Lower leg skin (tissue), 4 donors: ENCODE measurements at regions of chr1 and their contacts with region 1.

Region 1: DNA sequence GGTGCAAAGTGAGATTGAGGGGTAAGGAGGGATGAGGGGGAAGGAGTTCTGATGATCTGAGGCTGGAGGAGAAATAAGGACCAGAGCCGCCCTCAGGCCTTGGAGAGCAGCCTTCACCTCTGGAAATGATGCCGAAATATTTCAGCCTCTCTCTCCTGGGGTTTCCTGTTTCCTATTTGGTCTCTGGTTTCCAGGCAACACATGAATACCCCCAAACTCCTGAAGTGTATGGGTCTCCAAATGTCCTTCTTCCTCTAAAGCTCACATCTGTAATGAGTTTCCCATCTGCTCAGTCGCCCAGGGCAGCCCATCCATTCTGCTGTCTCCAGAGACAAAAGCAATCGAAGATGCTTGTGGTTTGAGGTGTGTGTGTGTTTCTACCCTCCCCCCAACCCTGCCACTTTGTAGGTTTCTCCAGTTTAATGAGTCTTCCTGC is 52.0 kb upstream of the FAM20B start:
- DNase-seq: no peak
- H3K4me3 ChIP-seq: no peak overlapping the region
- CTCF ChIP-seq: no peak
- POLR2A ChIP-seq: no peak

Region 2: DNA sequence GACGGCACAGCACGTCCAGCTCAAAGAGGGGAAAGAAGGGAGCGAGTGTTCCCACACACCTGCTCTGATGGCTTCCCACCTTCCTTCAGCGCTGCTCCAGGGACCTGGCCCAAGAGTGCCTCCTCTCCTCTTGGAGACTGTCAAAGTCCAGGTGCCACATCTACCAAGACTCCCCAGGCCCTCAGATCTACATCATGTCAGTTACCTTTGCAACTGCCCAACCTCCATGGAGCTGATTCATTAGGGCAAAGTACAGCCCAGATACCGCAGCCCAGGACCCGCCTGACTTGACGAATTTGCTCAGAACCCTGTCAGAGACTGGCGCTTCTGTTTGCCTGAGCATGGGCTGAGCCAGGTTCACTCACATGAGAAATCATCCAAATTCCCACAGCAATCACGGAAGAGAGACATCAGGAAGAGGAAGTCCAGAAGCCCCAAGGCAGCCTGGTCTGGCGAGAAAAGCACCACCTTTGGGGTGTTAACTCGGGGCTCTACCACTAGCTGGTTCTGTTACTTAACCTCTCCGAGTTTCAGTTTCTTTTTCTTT is 1003.8 kb before region 1 on chr1 and contains the start of gene SEC16B:
- intact Hi-C with region 1: loop called (anchors 5 kb)
- DNase-seq: no peak
- H3K4me3 ChIP-seq: no peak within 1 kb of the TSS
- CTCF ChIP-seq: no peak
- POLR2A ChIP-seq: no peak
- total RNA-seq, gene SEC16B: 0.21 to 1.8 (median 1.4) TPM

Region 3: DNA sequence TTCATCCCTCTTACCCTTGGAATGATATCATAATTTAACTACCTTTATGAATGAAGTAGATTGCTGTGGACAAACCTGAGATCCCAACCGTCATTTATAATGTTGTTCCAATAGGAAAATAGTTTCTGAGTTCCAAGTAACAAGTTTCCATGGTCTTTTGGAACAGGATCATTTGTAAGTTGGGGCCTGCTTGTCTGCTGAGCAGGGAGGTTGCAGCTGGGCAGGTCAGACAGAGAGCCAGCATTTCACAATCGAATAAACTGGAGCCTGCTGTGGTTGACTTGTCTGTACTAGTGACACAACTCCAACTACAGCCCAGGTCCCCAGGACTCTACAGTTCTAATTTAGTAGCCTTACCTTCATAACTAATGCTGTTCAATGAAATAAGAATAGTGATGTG is 267.3 kb before region 1 on chr1:
- intact Hi-C with region 1: no loop called
- DNase-seq: no peak
- H3K4me3 ChIP-seq: no peak overlapping the region
- CTCF ChIP-seq: no peak
- POLR2A ChIP-seq: no peak